ENCODE measurements at regions of chr9 and their contacts with region 1.

Region 1: DNA sequence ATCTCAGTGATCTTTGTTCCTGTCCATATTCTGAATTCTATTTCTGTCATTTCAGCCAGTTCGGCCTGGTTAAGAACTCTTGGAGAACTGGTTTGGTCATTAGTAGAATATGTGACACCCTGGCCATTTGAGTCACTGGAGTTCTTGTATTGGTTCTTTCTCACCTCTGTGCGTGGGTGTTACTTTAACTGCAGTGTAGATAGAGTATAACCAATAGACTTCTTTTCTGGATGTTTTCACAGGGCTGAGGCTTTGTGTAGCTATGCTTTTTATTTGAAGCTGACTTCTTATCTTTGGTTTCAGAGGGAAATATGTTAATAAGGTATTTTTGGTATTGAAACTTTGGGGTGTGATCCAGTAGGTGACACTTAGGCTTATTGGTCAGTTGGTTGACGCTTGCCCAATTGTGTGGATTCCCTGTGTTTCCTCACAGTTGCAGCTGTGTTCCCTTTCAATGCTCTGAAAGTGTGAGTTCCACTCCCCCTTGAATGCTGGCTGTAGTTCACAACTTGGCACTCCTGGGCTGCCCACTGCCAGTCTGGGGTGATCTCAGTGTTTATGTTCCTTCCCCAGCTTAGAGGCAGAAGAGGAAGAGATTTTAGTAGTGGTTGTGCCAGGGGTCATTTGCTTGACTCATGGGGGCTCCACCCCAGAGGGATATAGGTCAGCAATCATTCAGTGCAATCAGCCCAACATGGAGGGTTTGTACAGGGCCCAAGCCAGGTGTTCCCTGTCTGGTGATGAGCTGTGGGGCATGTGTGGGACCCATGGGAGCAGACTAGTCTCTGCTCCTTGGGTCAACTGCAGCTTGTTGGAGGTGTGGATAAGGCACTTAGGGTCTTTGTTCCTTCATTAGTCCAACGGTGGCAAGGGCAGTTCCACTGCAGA is 34.9 kb upstream of the TEK start:
- DNase-seq: no peak
- ATAC-seq: no peak
- H3K4me3 ChIP-seq: no peak overlapping the region
- H3K27ac ChIP-seq: no peak overlapping the region
- H3K4me1 ChIP-seq: no peaks in the 10 kb centered on the region
- H3K27me3 ChIP-seq: no peaks in the 10 kb centered on the region
- CTCF ChIP-seq: no peak
- EP300 ChIP-seq: no peak
- POLR2A ChIP-seq: no peak
- RAD21 ChIP-seq: no peak

Region 2: GRCh38 chr9:27022920-27023319 is 51.2 kb before region 1 on chr9:
- CTCF ChIA-PET with region 1: no interaction called
- POLR2A ChIA-PET with region 1: no interaction called
- RAD21 ChIA-PET with region 1: no interaction called
- SMC1A ChIA-PET with region 1: no interaction called
- in situ Hi-C with region 1: loop called (anchors 5 kb)
- intact Hi-C with region 1: no loop called
- DNase-seq: no peak
- ATAC-seq: no peak
- H3K4me3 ChIP-seq: no peak overlapping the region
- H3K27ac ChIP-seq: no peak overlapping the region
- H3K4me1 ChIP-seq: no peaks in the 10 kb centered on the region
- H3K27me3 ChIP-seq: no peaks in the 10 kb centered on the region
- CTCF ChIP-seq: no peak
- EP300 ChIP-seq: no peak
- POLR2A ChIP-seq: no peak
- RAD21 ChIP-seq: no peak

Region 3: GRCh38 chr9:27047136-27047535 is 26.9 kb before region 1 on chr9:
- CTCF ChIA-PET with region 1: no interaction called
- POLR2A ChIA-PET with region 1: no interaction called
- RAD21 ChIA-PET with region 1: no interaction called
- SMC1A ChIA-PET with region 1: no interaction called
- in situ Hi-C with region 1: no loop called
- intact Hi-C with region 1: no loop called
- DNase-seq: no peak
- ATAC-seq: no peak
- H3K4me3 ChIP-seq: no peak overlapping the region
- H3K27ac ChIP-seq: no peak overlapping the region
- H3K4me1 ChIP-seq: no peaks in the 10 kb centered on the region
- H3K27me3 ChIP-seq: no peaks in the 10 kb centered on the region
- CTCF ChIP-seq: no peak
- EP300 ChIP-seq: no peak
- POLR2A ChIP-seq: no peak
- RAD21 ChIP-seq: no peak

Region 4: GRCh38 chr9:27365707-27366376 is 291.8 kb after region 1 on chr9:
- CTCF ChIA-PET with region 1: no interaction called
- POLR2A ChIA-PET with region 1: no interaction called
- RAD21 ChIA-PET with region 1: no interaction called
- SMC1A ChIA-PET with region 1: no interaction called
- in situ Hi-C with region 1: no loop called
- intact Hi-C with region 1: no loop called
- DNase-seq: peak; percentile 74
- ATAC-seq: peak; percentile 91
- H3K4me3 ChIP-seq: peak overlapping the region; percentile 51; the same call in 1 of the 2 replicates
- H3K27ac ChIP-seq: peak overlapping the region; percentile 71
- H3K4me1 ChIP-seq: peaks cover 40% of the 10 kb centered on the region
- H3K27me3 ChIP-seq: no peaks in the 10 kb centered on the region; a peak in 1 of 4 replicates
- CTCF ChIP-seq: no peak
- EP300 ChIP-seq: 0 out of 4 replicates have a peak, but pooled peaks of 1 of the 2 experiments have one; percentile 10
- POLR2A ChIP-seq: no peak
- RAD21 ChIP-seq: no peak

Measured in GM12878 (cell line).